Left ventricle myocardium inferior (tissue), 1 donor: ENCODE measurements at regions of chr11 and their contacts with region 1.

Region 1: GRCh38 chr11:65539560-65540296 is 14.8 kb downstream of the SCYL1 start:
- DNase-seq: no peak
- H3K4me3 ChIP-seq: peak overlapping the region; percentile 65
- H3K27ac ChIP-seq: peak overlapping the region; percentile 94
- H3K4me1 ChIP-seq: peaks cover 29% of the 10 kb centered on the region
- H3K27me3 ChIP-seq: no peaks in the 10 kb centered on the region
- CTCF ChIP-seq: peak; percentile 71

Region 2: DNA sequence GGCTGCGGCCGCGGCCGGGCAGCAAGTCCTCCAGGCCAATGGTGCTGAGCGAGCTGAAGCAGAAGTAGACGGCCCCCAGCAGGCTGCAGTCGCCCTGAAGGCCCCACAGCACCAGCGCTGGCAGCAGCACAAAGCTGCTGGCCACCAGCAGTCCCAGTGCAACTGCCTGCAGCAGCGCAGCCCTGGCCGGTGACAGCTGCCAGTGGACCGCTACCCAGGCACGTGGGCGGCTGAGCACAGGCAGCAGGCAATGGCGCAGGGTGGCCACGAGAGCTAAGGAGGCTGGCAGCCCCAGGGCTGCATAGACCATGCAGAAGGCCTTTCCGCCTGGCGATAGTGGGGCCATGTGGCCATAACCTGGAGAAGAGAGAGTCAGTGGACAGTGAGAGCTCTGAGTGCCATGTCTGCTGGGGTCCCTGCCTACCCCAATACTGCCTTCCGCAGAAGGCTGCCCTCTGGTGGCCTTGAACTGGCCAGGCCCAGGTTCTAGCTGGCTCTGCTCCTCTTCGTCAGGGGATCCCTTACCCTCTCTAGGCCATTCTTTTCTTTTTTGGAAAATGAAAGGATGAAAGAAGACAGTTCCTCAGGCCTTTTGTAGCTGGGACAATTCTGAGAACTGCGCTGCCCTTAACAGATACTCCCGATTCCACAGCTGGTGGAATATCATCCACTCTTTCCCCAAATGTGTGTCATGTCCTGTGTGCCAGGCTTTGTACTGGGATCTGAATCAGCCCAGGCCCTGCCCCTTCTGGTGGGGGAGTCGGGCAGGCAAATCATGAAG is 54.0 kb after region 1 on chr11:
- intact Hi-C with region 1: loop called (anchors 10 kb)
- DNase-seq: no peak
- H3K4me3 ChIP-seq: no peak overlapping the region
- H3K27ac ChIP-seq: peak overlapping the region; percentile 1
- H3K4me1 ChIP-seq: peaks cover 65% of the 10 kb centered on the region
- H3K27me3 ChIP-seq: no peaks in the 10 kb centered on the region
- CTCF ChIP-seq: peak; percentile 78